Activated naive CD4-positive, alpha-beta T cell treated with anti-CD3 and anti-CD28 coated beads for 36 hours (primary cell): ENCODE measurements at regions of chr16 and their contacts with region 1.

Region 1: DNA sequence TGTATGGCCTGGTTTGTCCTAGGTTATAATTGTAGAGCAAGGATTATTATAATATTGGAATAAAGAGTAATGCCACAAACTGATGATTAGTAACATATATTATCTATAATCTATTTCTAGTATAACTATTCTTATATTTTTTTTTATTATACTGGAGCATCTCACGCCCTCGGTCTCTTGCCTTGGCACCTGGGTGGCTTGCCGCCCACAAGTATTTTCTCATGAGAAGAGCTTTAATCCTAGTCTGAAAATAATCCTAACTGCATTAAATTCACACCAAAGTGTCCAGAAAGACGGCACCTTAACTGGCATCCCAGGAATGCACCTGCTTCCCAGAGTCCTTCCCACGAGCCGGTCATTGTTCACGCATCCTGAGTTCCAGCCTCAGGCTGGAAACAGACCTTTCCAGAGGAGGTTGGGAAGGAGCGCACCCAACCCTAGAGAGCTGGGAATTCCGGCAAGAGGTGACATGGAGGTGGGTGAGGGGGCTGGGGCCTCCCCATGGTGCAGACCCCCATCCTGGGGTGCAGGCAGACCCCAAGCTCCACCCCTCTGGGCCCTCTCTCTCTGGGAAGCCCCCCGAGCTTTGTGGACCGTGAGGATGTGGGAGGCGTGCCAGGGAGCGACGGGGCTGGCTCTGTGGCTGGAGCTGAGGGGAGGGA is 15.9 kb downstream of the CHMP1A start:
- DNase-seq: no peak
- H3K4me3 Mint-ChIP-seq: no peak overlapping the region
- H3K27ac Mint-ChIP-seq: no peak overlapping the region
- H3K4me1 Mint-ChIP-seq: peaks cover 7% of the 10 kb centered on the region
- H3K27me3 Mint-ChIP-seq: no peaks in the 10 kb centered on the region

Region 2: DNA sequence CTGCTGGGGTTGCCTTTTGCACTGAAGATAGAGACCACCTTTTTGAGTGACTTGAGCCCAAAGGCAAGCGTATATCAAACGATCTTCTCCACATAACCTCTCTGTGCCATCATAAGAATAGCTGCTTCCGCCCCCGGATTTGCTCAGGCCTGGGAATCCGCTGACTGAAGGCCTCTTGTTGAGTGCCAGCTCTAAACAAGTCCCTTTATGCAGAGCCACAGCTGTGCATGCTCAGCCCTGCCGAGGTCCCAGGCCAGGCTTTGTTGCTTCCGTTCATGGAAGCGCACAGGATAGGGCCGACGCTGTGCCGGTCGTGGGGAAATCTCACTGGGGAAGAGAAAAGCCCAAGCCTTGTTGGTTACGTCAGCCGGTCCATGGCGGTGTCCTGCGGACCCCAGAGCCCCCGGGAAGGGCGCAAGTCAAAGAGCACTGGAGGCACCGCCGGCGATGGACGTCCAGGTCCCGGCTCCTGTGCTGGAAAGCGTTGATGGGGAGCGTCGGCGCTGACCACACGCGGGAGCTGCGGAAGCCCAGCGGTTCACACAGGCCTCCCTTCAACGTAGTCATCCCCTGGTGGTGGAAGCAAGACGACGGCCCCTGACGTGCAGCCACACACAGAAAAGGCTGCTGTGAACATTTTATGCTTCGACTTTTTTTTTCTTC is 104.6 kb before region 1 on chr16:
- CTCF ChIA-PET with region 1: no interaction called
- intact Hi-C with region 1: no loop called
- DNase-seq: no peak
- H3K4me3 Mint-ChIP-seq: no peak overlapping the region
- H3K27ac Mint-ChIP-seq: no peak overlapping the region
- H3K4me1 Mint-ChIP-seq: peaks cover 21% of the 10 kb centered on the region
- H3K27me3 Mint-ChIP-seq: no peaks in the 10 kb centered on the region

Region 3: GRCh38 chr16:89574681-89575246 is 66.8 kb before region 1 on chr16:
- CTCF ChIA-PET with region 1: interaction called, 5 read pairs
- intact Hi-C with region 1: loop called (anchors 1 kb)
- DNase-seq: peak; percentile 75
- H3K4me3 Mint-ChIP-seq: peak overlapping the region; percentile 51
- H3K27ac Mint-ChIP-seq: no peak overlapping the region
- H3K4me1 Mint-ChIP-seq: peaks cover 14% of the 10 kb centered on the region
- H3K27me3 Mint-ChIP-seq: peaks cover 11% of the 10 kb centered on the region

Region 4: DNA sequence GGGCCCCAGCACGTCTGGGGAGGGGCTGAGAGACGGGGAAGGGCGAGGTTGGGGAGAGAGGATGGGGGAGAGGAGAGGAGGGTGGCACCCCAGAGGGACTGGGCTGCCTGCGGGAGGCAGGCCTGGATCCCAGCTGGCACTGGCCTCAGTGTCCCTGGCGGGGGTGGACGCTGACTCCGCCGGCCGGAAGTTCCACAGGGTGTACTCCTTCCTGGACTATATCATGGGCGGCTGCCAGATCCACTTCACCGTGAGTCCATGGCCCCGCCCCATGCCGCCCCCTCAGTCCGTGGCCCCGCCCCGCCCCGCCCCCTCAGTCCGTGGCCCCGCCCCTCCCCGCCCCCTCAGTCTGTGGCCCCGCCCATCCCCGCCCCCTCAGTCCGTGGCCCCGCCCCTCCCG is 54.7 kb before region 1 on chr16:
- CTCF ChIA-PET with region 1: no interaction called
- intact Hi-C with region 1: no loop called
- DNase-seq: no peak
- H3K4me3 Mint-ChIP-seq: no peak overlapping the region
- H3K27ac Mint-ChIP-seq: no peak overlapping the region
- H3K4me1 Mint-ChIP-seq: no peaks in the 10 kb centered on the region
- H3K27me3 Mint-ChIP-seq: no peaks in the 10 kb centered on the region

Region 5: DNA sequence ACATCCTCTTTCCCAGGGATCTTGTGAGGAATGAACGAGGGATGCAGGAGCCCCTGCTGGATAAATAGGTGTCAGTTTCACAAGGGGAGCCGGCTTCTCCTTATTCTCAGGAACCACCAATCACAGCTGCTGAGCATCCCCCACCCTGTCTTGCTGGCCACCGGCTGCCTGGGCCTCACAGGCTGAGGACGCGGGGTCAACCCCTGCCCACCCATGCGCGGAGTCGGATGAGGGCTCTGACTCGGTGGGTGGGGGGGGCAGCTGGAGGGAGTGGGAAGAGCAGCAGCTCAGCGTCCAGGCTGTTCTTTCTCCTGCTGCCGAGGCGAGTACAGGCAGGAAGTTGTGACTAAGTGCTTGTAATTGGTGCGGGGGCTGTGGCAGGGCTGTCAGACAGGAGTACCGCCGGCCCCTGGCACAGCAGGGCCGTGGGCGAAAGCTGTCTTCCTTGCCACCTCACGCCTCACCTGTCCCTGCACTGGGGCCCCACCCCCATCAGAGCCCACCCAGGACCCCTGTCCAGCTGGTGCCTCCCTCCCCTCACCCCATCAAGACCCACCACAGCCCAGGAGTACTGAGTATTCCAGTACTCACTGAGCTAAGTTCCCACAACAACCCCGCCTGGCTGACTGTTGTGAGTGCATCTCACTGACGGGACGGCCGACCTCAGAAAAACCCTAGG is 39.2 kb before region 1 on chr16:
- CTCF ChIA-PET with region 1: interaction called, 4 read pairs
- intact Hi-C with region 1: loop called (anchors 5 kb)
- DNase-seq: peak; percentile 79
- H3K4me3 Mint-ChIP-seq: no peak overlapping the region
- H3K27ac Mint-ChIP-seq: no peak overlapping the region
- H3K4me1 Mint-ChIP-seq: peaks cover 14% of the 10 kb centered on the region
- H3K27me3 Mint-ChIP-seq: no peaks in the 10 kb centered on the region

Region 6: DNA sequence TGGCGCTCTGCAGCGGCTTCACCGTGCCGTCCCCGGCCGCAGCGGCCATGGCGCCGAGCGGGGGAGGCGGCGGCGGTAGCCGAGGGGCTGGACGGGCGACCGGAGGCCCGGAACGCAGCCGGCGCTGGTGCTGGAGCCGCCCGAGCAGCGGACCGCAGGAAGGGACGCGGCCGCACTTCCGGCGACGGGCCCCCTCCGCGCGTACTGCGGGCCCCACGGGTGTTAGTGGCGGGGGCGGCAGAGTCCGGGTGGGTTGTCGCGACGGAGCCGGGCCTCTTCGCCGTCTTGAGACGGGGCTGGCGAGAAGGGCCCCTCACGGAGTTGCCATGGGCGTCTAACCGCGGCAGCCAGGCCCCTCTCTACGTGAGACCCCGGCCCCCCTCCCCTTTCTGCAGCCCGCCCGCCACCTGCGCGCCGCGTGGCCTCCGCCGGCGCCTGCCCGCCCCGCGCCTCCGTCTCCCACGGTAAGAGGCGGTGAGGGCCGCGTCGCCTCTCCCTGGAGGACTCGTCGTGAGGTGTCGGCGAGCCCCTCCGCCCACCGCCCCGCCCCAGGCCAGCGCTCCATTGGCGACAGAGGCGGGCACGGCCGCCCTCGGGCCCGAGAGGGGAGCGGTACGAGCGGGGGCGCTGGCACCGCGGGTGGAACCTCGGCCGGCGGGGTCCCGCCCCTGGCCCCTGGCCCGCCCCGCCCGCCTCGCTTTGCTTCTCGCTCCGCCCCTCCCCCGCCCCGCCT is 79.4 kb after region 1 on chr16 and contains the starts of genes VPS9D1 and ZNF276:
- CTCF ChIA-PET with region 1: no interaction called
- intact Hi-C with region 1: no loop called
- DNase-seq: peak; percentile 84
- H3K4me3 Mint-ChIP-seq: peak within 1 kb of the TSS; percentile 77
- H3K27ac Mint-ChIP-seq: peak within 1 kb of the TSS; percentile 85
- H3K4me1 Mint-ChIP-seq: peaks cover 43% of the 10 kb centered on the region
- H3K27me3 Mint-ChIP-seq: no peaks in the 10 kb centered on the region
- total RNA-seq, gene VPS9D1: 0.91 to 1.4 TPM
- total RNA-seq, gene ZNF276: 19.8 to 25.3 TPM